Activated CD4-positive, alpha-beta memory T cell treated with anti-CD3 and anti-CD28 coated beads, Interleukin-2, amount 10 ng/mL, durations not matched to agents 7 days and 5 days (primary cell): ENCODE measurements at regions of chr22 and their contacts with region 1.

Region 1: GRCh38 chr22:50250555-50251476 is at the start of gene HDAC10:
- DNase-seq: peak; percentile 90
- H3K4me3 Mint-ChIP-seq: peak within 1 kb of the TSS; percentile 82
- H3K27ac Mint-ChIP-seq: peak within 1 kb of the TSS; percentile 69
- H3K4me1 Mint-ChIP-seq: peaks cover 29% of the 10 kb centered on the region
- H3K27me3 Mint-ChIP-seq: no peaks in the 10 kb centered on the region
- total RNA-seq, gene HDAC10: 83.7 to 90.0 TPM

Region 2: GRCh38 chr22:50190182-50190940 is 60.5 kb before region 1 on chr22:
- CTCF ChIA-PET with region 1: no interaction called
- POLR2A ChIA-PET with region 1: interaction called, 14 read pairs
- DNase-seq: peak; percentile 87
- H3K4me3 Mint-ChIP-seq: peak overlapping the region; percentile 79
- H3K27ac Mint-ChIP-seq: peak overlapping the region; percentile 95
- H3K4me1 Mint-ChIP-seq: peaks cover 57% of the 10 kb centered on the region
- H3K27me3 Mint-ChIP-seq: no peaks in the 10 kb centered on the region

Region 3: DNA sequence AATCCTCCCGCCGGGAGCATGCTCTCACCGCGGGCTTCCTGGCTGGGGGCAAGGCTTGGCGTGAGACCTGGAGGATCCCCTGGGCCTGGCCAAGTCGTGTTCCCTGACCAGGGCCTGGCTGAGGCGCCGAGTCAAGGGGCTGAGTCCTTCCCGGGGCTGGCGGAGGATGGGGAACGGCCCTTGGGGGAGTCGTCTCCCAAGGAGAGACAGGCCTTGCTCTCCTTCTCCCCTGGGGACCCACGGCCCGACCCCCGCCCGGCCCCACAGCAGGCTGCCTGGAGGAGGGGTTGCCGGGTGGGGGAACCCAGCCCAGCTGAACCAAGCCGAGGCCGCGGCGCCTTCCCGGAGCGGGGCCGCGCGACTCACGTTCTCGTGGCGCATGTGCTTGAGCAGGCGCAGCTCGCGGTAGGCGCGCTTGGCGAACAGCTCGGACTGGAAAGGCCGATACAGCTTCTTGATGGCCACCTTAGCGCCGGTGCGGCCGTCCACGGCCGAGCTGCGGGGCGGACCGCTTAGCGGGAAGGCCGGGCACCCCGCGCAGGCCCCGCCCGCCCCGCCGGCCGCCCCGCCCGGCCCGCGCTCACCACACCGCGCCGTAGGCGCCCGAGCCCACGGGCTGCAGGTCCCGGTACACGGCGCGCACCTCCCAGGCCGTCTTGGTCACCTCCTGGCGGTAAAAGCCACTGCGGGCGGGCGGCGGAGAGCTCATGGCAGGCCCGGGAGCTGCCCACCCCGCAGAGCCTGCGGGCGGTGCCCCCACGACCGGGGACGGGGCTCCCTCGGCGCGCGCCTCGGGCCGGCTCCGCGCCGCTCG is 10.2 kb after region 1 on chr22:
- CTCF ChIA-PET with region 1: interaction called, 4 read pairs
- POLR2A ChIA-PET with region 1: interaction called, 21 read pairs
- DNase-seq: no peak
- H3K4me3 Mint-ChIP-seq: peak overlapping the region; percentile 17
- H3K27ac Mint-ChIP-seq: no peak overlapping the region
- H3K4me1 Mint-ChIP-seq: peaks cover 8% of the 10 kb centered on the region
- H3K27me3 Mint-ChIP-seq: peaks cover 12% of the 10 kb centered on the region

Region 4: GRCh38 chr22:50270666-50271394 is 20.0 kb after region 1 on chr22:
- CTCF ChIA-PET with region 1: interaction called, 11 read pairs
- POLR2A ChIA-PET with region 1: interaction called, 13 read pairs
- DNase-seq: peak; percentile 80
- H3K4me3 Mint-ChIP-seq: peak overlapping the region; percentile 65
- H3K27ac Mint-ChIP-seq: peak overlapping the region; percentile 19
- H3K4me1 Mint-ChIP-seq: peaks cover 15% of the 10 kb centered on the region
- H3K27me3 Mint-ChIP-seq: peaks cover 6% of the 10 kb centered on the region

Region 5: GRCh38 chr22:50276143-50276542 is 25.3 kb after region 1 on chr22:
- CTCF ChIA-PET with region 1: interaction called, 11 read pairs
- POLR2A ChIA-PET with region 1: no interaction called
- DNase-seq: peak; percentile 73
- H3K4me3 Mint-ChIP-seq: no peak overlapping the region
- H3K27ac Mint-ChIP-seq: no peak overlapping the region
- H3K4me1 Mint-ChIP-seq: peaks cover 1% of the 10 kb centered on the region
- H3K27me3 Mint-ChIP-seq: peaks cover 4% of the 10 kb centered on the region

Region 6: GRCh38 chr22:50341977-50342650 is 91.3 kb after region 1 on chr22:
- CTCF ChIA-PET with region 1: interaction called, 11 read pairs
- POLR2A ChIA-PET with region 1: interaction called, 10 read pairs
- DNase-seq: peak; percentile 89
- H3K4me3 Mint-ChIP-seq: peak overlapping the region; percentile 77
- H3K27ac Mint-ChIP-seq: peak overlapping the region; percentile 88
- H3K4me1 Mint-ChIP-seq: peaks cover 11% of the 10 kb centered on the region
- H3K27me3 Mint-ChIP-seq: no peaks in the 10 kb centered on the region